ENCODE measurements at regions of chr6 and their contacts with region 1.

Region 1: GRCh38 chr6:27893059-27893835 is 18.9 kb downstream of the OR2B2 start:
- DNase-seq: peak; percentile 71 to 93 (median 86)
- ATAC-seq: peak; percentile 72 to 79 (median 76)
- H3K4me3 ChIP-seq: peak overlapping the region; percentile 71 to 76
- H3K4me3 Mint-ChIP-seq: no peak overlapping the region
- H3K27ac ChIP-seq: peak overlapping the region; percentile 89
- H3K27ac Mint-ChIP-seq: no peak overlapping the region
- H3K4me1 ChIP-seq: peaks cover 19 to 40% of the 10 kb centered on the region in 2 experiments
- H3K4me1 Mint-ChIP-seq: peaks cover 28 to 36% (median 29%) of the 10 kb centered on the region in 3 donors
- H3K27me3 ChIP-seq: no peaks in the 10 kb centered on the region
- H3K27me3 Mint-ChIP-seq: no peaks in the 10 kb centered on the region

Region 2: GRCh38 chr6:26216356-26216885 is 1676.8 kb before region 1 on chr6:
- CTCF ChIA-PET with region 1: interaction called in 1 of 2 experiments, 4 read pairs
- POLR2A ChIA-PET with region 1: interaction called in 1 of 2 experiments, 12 read pairs
- DNase-seq: peak; percentile 56 to 93 (median 76)
- ATAC-seq: peak; percentile 77 to 87 (median 83)
- H3K4me3 ChIP-seq: peak overlapping the region; percentile 73 to 91
- H3K4me3 Mint-ChIP-seq: no peak overlapping the region
- H3K27ac ChIP-seq: peak overlapping the region; percentile 94
- H3K27ac Mint-ChIP-seq: no peak overlapping the region
- H3K4me1 ChIP-seq: peaks cover 13 to 32% of the 10 kb centered on the region in 2 experiments
- H3K4me1 Mint-ChIP-seq: peaks cover 0 to 8% (median 5%) of the 10 kb centered on the region in 3 donors
- H3K27me3 ChIP-seq: no peaks in the 10 kb centered on the region
- H3K27me3 Mint-ChIP-seq: no peaks in the 10 kb centered on the region

Region 3: GRCh38 chr6:27132532-27133280 is 760.5 kb before region 1 on chr6:
- CTCF ChIA-PET with region 1: interaction called in 1 of 2 experiments, 6 read pairs
- POLR2A ChIA-PET with region 1: interaction called, 7 to 46 read pairs
- DNase-seq: peak; percentile 76 to 98 (median 87)
- ATAC-seq: peak; percentile 80 to 87 (median 86)
- H3K4me3 ChIP-seq: peak overlapping the region; percentile 49 to 77
- H3K4me3 Mint-ChIP-seq: no peak overlapping the region
- H3K27ac ChIP-seq: peak overlapping the region; percentile 85
- H3K27ac Mint-ChIP-seq: no peak overlapping the region
- H3K4me1 ChIP-seq: peaks cover 17 to 34% of the 10 kb centered on the region in 2 experiments
- H3K4me1 Mint-ChIP-seq: peaks cover 22 to 30% (median 22%) of the 10 kb centered on the region in 3 donors
- H3K27me3 ChIP-seq: no peaks in the 10 kb centered on the region
- H3K27me3 Mint-ChIP-seq: no peaks in the 10 kb centered on the region

Region 4: GRCh38 chr6:27687154-27688013 is 205.9 kb before region 1 on chr6:
- CTCF ChIA-PET with region 1: interaction called in 1 of 2 experiments, 13 read pairs
- POLR2A ChIA-PET with region 1: interaction called in 1 of 2 experiments, 3 read pairs
- DNase-seq: peak; percentile 47 to 84 (median 65)
- ATAC-seq: peak; percentile 63 to 78 (median 76)
- H3K4me3 ChIP-seq: peak overlapping the region; percentile 78 to 79
- H3K4me3 Mint-ChIP-seq: peak overlapping the region; percentile 85 to 94 (median 85)
- H3K27ac ChIP-seq: peak overlapping the region; percentile 40
- H3K27ac Mint-ChIP-seq: peak overlapping the region; percentile 86 to 91
- H3K4me1 ChIP-seq: peaks cover 4 to 19% of the 10 kb centered on the region in 2 experiments
- H3K4me1 Mint-ChIP-seq: peaks cover 24 to 30% (median 27%) of the 10 kb centered on the region in 3 donors
- H3K27me3 ChIP-seq: peaks cover 10 to 18% of the 10 kb centered on the region in 2 experiments
- H3K27me3 Mint-ChIP-seq: peaks cover 0 to 11% of the 10 kb centered on the region in 2 donors

Region 5: DNA sequence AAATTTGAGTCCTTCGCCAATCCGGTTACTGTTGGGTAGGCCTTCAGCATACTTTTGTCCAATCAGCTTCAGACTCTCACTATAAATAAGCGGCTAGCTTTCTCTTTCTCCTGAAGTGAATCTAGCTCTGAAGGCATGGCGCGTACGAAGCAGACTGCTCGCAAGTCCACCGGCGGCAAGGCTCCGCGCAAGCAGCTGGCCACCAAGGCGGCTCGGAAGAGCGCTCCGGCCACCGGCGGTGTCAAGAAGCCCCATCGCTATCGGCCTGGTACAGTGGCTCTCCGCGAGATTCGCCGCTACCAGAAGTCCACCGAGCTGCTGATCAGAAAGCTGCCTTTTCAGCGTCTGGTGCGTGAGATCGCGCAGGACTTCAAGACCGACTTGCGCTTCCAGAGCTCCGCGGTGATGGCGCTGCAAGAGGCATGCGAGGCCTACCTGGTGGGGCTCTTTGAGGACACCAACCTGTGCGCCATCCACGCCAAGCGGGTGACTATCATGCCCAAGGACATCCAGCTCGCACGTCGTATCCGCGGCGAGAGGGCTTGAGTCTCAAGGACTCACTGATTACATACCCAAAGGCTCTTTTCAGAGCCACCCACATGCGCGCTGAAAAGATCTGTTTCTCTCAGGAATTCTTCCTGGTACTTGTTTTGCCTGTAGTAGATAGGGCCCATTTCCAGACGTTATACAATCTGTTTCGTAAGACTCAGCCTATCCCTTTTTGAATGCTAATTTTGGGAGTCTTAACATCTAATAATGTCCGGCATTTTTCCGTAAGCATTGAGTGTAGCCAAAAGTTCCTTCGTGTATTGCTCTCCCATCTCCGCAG is 83.1 kb before region 1 on chr6:
- CTCF ChIA-PET with region 1: interaction called, 10 to 81 read pairs
- POLR2A ChIA-PET with region 1: interaction called, 59 to 223 read pairs
- DNase-seq: peak; percentile 60 to 94 (median 73)
- ATAC-seq: peak; percentile 61 to 66 (median 62)
- H3K4me3 ChIP-seq: peak overlapping the region; percentile 62 to 68
- H3K4me3 Mint-ChIP-seq: peak overlapping the region; percentile 87 to 94 (median 90)
- H3K27ac ChIP-seq: peak overlapping the region; percentile 81
- H3K27ac Mint-ChIP-seq: peak overlapping the region; percentile 95 to 98
- H3K4me1 ChIP-seq: peaks cover 38% of the 10 kb centered on the region in 2 experiments
- H3K4me1 Mint-ChIP-seq: peaks cover 48 to 61% (median 52%) of the 10 kb centered on the region in 3 donors
- H3K27me3 ChIP-seq: no peaks in the 10 kb centered on the region
- H3K27me3 Mint-ChIP-seq: no peaks in the 10 kb centered on the region

Region 6: GRCh38 chr6:27864906-27865849 is 28.1 kb before region 1 on chr6:
- CTCF ChIA-PET with region 1: interaction called, 4 to 99 read pairs
- POLR2A ChIA-PET with region 1: interaction called, 62 to 446 read pairs
- DNase-seq: peak; percentile 30 to 95 (median 62)
- ATAC-seq: peak; percentile 78 to 85 (median 80)
- H3K4me3 ChIP-seq: peak overlapping the region; percentile 76 to 96
- H3K4me3 Mint-ChIP-seq: peak overlapping the region; percentile 98 to 99 (median 98)
- H3K27ac ChIP-seq: peak overlapping the region; percentile 78
- H3K27ac Mint-ChIP-seq: peak overlapping the region; percentile 89 to 96
- H3K4me1 ChIP-seq: peaks cover 14 to 38% of the 10 kb centered on the region in 2 experiments
- H3K4me1 Mint-ChIP-seq: peaks cover 43 to 48% (median 45%) of the 10 kb centered on the region in 3 donors
- H3K27me3 ChIP-seq: no peaks in the 10 kb centered on the region
- H3K27me3 Mint-ChIP-seq: no peaks in the 10 kb centered on the region

Region 7: DNA sequence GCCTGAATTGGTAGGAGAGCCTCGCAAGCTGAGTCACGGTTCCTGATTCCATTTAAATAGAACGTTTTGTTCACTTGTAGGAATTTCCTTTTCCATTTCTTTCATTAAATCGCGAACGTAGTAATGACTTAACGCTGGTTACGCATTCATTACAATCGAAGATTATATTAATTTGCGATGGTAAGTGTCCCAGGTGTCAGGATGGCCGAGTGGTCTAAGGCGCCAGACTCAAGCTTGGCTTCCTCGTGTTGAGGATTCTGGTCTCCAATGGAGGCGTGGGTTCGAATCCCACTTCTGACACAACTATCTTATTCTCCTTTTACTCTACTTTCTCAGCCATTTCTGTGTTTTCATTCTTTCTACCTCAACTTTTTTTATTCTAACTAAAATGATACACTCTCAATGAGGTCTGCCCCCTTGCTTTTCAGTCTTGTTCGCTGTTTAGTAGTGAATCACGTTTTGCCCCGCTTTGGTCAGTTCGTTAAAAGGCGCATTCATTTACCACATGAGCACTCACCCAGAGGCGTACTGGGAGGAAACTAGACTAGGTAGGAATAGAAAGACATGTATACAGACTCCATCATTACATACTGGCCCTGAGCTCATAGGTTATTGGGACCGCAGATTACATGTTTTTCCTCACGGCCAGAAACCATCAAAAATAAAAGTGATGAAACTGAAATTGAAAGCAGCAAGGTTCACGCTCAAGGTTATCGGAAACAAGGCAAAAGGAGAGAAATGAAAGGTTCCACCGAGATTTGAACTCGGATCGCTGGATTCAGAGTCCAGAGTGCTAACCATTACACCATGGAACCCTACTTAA is 1047.8 kb after region 1 on chr6:
- CTCF ChIA-PET with region 1: no interaction called
- POLR2A ChIA-PET with region 1: interaction called in 1 of 2 experiments, 10 read pairs
- DNase-seq: peak; percentile 52 to 86 (median 73)
- ATAC-seq: peak; percentile 71 to 72 (median 71)
- H3K4me3 ChIP-seq: peak overlapping the region; percentile 63 to 72
- H3K4me3 Mint-ChIP-seq: peak overlapping the region; percentile 83 to 88 (median 85)
- H3K27ac ChIP-seq: peak overlapping the region; percentile 71
- H3K27ac Mint-ChIP-seq: peak overlapping the region; percentile 87 to 89
- H3K4me1 ChIP-seq: peaks cover 24 to 33% of the 10 kb centered on the region in 2 experiments
- H3K4me1 Mint-ChIP-seq: peaks cover 53 to 56% (median 55%) of the 10 kb centered on the region in 3 donors
- H3K27me3 ChIP-seq: no peaks in the 10 kb centered on the region
- H3K27me3 Mint-ChIP-seq: peaks cover 0 to 2% of the 10 kb centered on the region in 2 donors

Measured in T-cell (primary cell).